Esophagus muscularis mucosa (tissue), 4 donors: ENCODE measurements at regions of chr11 and their contacts with region 1.

Region 1: GRCh38 chr11:83071567-83072349 is at the start of gene RAB30:
- DNase-seq: peak; percentile 99
- H3K4me3 ChIP-seq: peak within 1 kb of the TSS; percentile 73 to 85 (median 77)
- H3K27ac ChIP-seq: peak within 1 kb of the TSS; percentile 92 to 95 (median 92)
- H3K4me1 ChIP-seq: peaks cover 37 to 53% (median 46%) of the 10 kb centered on the region in 4 donors
- H3K27me3 ChIP-seq: no peaks in the 10 kb centered on the region
- CTCF ChIP-seq: no peak
- EP300 ChIP-seq: no peak
- POLR2A ChIP-seq: peak; percentile 76
- total RNA-seq, gene RAB30: 11.3 to 19.8 (median 18.2) TPM

Region 2: GRCh38 chr11:82927254-82927880 is 144.4 kb before region 1 on chr11:
- intact Hi-C with region 1: loop called (anchors 5 kb)
- DNase-seq: no peak
- H3K4me3 ChIP-seq: no peak overlapping the region
- H3K27ac ChIP-seq: no peak overlapping the region
- H3K4me1 ChIP-seq: no peaks in the 10 kb centered on the region
- H3K27me3 ChIP-seq: no peaks in the 10 kb centered on the region
- CTCF ChIP-seq: peak; percentile 64 to 82 (median 77)
- EP300 ChIP-seq: no peak
- POLR2A ChIP-seq: no peak

Region 3: DNA sequence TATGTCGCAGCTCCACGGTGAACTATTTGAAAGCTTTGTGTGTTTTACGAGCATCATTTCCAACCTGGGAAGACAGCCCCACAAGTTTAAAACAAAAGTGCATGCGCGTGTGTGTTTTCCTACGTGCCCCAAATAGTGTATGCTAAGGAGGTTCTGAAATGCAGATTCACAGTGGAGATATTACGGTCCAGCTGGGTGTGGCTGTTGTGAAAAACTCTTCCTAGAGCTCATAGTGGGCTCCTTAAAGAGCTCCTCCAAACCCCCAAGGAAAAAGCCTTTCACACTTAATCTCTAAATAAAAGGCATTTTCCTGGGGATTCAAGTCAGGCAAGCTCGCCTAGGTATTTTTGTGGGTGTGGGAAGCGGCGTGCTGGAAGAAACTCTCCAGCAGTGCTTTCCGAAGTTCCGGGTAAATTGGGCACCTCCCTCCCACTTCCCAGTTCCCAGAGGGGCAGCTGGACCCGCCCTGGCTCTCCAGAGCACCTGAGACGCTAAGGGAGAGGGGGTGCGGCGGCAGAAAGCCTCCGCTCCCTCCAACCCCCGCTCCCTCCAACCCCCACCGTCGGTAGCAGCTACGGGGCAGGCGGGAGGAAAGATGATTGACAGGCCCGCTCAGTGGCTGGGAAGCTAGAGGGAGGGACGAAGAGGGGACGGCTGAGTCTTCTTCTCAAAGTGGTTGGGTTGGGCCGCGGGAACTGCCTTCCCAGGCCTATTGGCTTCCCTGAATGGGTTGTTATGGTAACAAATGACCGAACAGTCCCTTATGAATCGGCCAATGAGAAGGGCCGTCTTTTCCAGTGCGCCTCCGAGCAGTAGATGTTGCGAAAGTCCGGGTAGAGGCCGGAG is 84.6 kb after region 1 on chr11:
- intact Hi-C with region 1: loop called (anchors 5 kb)
- DNase-seq: peak; percentile 100
- H3K4me3 ChIP-seq: peak overlapping the region; percentile 77 to 97 (median 92)
- H3K27ac ChIP-seq: peak overlapping the region; percentile 94 to 100 (median 98)
- H3K4me1 ChIP-seq: peaks cover 16 to 27% (median 24%) of the 10 kb centered on the region in 4 donors
- H3K27me3 ChIP-seq: no peaks in the 10 kb centered on the region
- CTCF ChIP-seq: no peak
- EP300 ChIP-seq: no peak
- POLR2A ChIP-seq: peak; percentile 94